ENCODE measurements at regions of chr5 and their contacts with region 1.

Region 1: DNA sequence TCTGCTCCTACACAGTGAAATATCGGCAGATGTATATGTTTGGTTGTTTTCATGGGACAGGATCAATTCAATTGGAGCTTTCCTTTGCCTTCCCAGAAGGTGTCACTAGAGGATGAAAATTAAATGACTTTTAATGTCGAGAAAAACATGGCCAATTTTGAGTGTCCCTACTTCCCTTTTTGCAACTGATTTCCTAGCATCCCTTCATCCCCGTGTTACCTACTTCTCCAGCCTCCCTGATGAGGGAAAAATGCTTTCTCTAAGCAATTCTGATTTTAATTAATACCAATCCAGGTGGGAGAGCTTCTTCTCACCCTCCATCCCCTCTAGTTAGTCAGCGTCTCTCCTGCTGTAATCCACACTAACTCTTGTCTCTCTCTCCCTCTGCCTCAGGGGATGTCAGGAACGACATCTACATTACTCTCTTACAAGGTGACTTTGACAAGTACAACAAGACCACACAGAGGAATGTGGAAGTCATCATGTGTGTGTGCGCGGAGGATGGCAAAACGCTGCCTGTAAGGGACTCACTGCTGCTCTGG is 64.9 kb downstream of the DOCK2 start:
- DNase-seq: no peak
- ATAC-seq: no peak
- H3K4me3 ChIP-seq: no peak overlapping the region
- H3K27ac ChIP-seq: peak overlapping the region; percentile 89
- H3K4me1 ChIP-seq: peaks cover 51% of the 10 kb centered on the region
- H3K27me3 ChIP-seq: no peaks in the 10 kb centered on the region
- CTCF ChIP-seq: peak; percentile 30 to 50 (median 39); a peak in 4 of 6 replicates
- EP300 ChIP-seq: no peak
- POLR2A ChIP-seq: no peak
- RAD21 ChIP-seq: peak; percentile 54

Region 2: DNA sequence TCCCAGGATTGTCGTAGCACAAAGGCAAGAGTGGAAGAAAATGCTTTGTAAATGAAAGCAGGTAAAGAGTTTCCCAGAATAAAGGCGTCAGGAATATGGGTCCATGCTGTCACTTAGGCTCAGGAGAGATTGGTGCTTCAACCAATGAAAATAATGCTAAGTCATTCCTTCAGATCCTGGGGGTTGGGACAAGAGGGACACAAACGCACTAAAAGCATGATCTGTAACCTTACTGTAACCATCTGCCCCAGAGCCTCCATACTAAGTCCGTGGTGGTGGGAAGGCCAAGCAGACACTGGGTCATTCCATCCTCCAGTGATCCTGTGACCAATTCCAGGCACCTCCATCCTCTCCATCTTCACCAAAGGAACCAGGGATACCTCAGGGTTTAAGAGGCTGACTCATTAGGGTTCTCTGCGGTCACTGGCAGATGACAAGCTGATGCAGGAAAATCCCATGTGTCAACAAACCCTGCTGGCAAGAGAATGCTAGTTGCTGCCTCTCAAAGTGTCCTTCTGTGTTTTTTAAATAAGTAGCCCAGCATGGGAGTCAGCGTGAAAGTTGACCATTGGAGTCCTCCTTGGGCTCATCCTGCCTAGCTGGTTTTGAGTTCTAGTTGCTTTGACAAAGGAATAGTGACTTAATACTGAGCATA is 601.4 kb before region 1 on chr5:
- CTCF ChIA-PET with region 1: no interaction called
- POLR2A ChIA-PET with region 1: no interaction called
- RAD21 ChIA-PET with region 1: no interaction called
- SMC1A ChIA-PET with region 1: no interaction called
- in situ Hi-C with region 1: no loop called
- intact Hi-C with region 1: no loop called
- DNase-seq: no peak
- ATAC-seq: no peak
- H3K4me3 ChIP-seq: no peak overlapping the region
- H3K27ac ChIP-seq: no peak overlapping the region
- H3K4me1 ChIP-seq: no peaks in the 10 kb centered on the region
- H3K27me3 ChIP-seq: peaks cover 0 to 2% of the 10 kb centered on the region in 2 experiments; a peak in 2 of 4 replicates
- CTCF ChIP-seq: no peak
- EP300 ChIP-seq: no peak
- POLR2A ChIP-seq: no peak
- RAD21 ChIP-seq: no peak

Region 3: DNA sequence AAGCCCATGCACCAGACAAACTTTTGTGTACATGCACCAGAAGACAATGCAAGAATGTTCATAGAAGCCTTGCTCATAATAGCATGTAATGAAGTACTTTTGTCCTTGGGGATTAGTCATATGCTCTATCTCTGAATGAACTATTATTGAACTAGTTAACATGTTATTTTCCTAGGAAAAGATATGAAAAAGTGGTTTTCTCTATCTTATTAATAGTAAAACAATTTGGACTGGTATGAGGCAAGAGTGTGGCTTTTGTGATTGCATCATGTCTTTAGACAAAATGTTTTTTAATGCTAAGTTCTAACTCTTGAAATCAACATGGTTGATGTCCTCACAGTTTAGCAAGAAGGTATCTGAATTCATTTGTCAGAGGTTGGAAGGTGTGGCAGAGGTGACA is 174.1 kb before region 1 on chr5:
- CTCF ChIA-PET with region 1: no interaction called
- POLR2A ChIA-PET with region 1: no interaction called
- RAD21 ChIA-PET with region 1: no interaction called
- SMC1A ChIA-PET with region 1: no interaction called
- in situ Hi-C with region 1: no loop called
- intact Hi-C with region 1: no loop called
- DNase-seq: no peak
- ATAC-seq: no peak
- H3K4me3 ChIP-seq: no peak overlapping the region
- H3K27ac ChIP-seq: no peak overlapping the region
- H3K4me1 ChIP-seq: no peaks in the 10 kb centered on the region
- H3K27me3 ChIP-seq: no peaks in the 10 kb centered on the region; a peak in 2 of 4 replicates
- CTCF ChIP-seq: no peak
- EP300 ChIP-seq: no peak
- POLR2A ChIP-seq: no peak
- RAD21 ChIP-seq: no peak

Region 4: DNA sequence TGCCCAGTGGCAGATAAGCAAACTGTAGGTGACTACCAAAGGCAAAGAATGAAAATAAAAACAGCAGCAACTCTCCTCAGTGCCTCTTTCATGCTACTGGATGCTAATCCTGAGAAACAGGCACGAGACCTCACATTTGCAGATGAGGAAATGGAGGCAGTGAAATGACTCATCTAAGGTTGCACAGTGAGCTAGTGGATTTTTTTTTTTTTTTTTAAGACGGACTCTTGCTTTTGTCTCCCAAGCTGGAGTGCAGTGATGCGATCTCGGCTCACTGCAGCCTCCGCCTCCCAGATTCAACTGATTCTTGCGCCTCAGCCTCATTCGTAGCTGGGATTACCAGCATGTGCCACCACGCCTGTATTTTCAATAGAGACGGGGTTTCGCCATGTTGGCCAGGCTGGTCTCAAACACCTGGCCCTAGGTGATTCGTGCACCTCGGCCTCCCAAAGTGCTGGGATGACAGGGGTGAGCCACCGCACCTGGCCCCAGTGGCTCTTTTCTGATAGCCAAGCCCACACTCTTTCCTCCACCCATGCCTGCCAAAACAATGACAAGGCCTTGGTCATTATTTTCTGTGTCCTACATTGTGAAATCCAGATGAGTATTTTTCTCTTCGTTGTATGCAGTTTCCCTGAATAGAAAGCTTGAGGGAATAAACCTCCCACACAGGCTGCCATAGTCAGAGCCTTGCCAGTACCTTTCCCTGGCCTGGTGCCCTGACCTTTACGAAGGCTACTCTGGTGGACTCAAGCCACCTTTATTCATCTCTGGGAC is 45.7 kb before region 1 on chr5:
- CTCF ChIA-PET with region 1: interaction called, 3 read pairs
- POLR2A ChIA-PET with region 1: interaction called, 3 read pairs
- RAD21 ChIA-PET with region 1: interaction called, 9 read pairs
- SMC1A ChIA-PET with region 1: interaction called, 12 read pairs
- in situ Hi-C with region 1: no loop called
- intact Hi-C with region 1: no loop called
- DNase-seq: peak; percentile 79
- ATAC-seq: peak; percentile 75
- H3K4me3 ChIP-seq: peak overlapping the region; percentile 40; the same call in 1 of the 2 replicates
- H3K27ac ChIP-seq: peak overlapping the region; percentile 88
- H3K4me1 ChIP-seq: peaks cover 60% of the 10 kb centered on the region
- H3K27me3 ChIP-seq: no peaks in the 10 kb centered on the region
- CTCF ChIP-seq: no peak
- EP300 ChIP-seq: peak; percentile 56 to 70; a peak in 3 of 4 replicates
- POLR2A ChIP-seq: no peak
- RAD21 ChIP-seq: peak; percentile 21; the same call in 1 of the 2 replicates

Region 5: GRCh38 chr5:169753795-169754194 is 51.8 kb after region 1 on chr5:
- CTCF ChIA-PET with region 1: interaction called, 3 read pairs
- POLR2A ChIA-PET with region 1: no interaction called
- RAD21 ChIA-PET with region 1: interaction called, 7 read pairs
- SMC1A ChIA-PET with region 1: interaction called, 10 read pairs
- in situ Hi-C with region 1: no loop called
- intact Hi-C with region 1: no loop called
- DNase-seq: no peak
- ATAC-seq: peak; percentile 18; the same call in 2 of the 3 replicates
- H3K4me3 ChIP-seq: no peak overlapping the region
- H3K27ac ChIP-seq: no peak overlapping the region
- H3K4me1 ChIP-seq: no peaks in the 10 kb centered on the region
- H3K27me3 ChIP-seq: no peaks in the 10 kb centered on the region
- CTCF ChIP-seq: no peak
- EP300 ChIP-seq: no peak
- POLR2A ChIP-seq: no peak
- RAD21 ChIP-seq: no peak

Region 6: DNA sequence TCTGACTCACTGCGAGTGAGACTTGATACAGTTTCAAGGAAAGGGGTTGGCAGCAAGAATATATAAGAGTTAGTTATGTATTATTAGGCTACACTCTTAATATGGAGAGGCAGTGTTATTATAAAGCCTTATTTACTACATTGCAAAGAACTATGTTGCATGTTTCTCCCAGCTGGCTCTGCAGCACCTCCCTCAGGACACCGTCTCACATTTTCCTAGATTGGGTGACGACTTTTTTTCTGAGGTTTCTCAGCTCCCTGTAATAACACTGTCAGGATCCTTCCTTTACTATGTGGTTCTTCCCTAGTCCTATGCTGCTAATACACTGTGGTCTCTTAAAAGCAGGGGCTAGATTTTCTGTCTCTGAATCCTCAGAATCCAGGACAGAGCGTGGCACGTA is 124.6 kb after region 1 on chr5:
- CTCF ChIA-PET with region 1: interaction called, 8 read pairs
- POLR2A ChIA-PET with region 1: no interaction called
- RAD21 ChIA-PET with region 1: interaction called, 12 read pairs
- SMC1A ChIA-PET with region 1: interaction called, 3 read pairs
- in situ Hi-C with region 1: no loop called
- intact Hi-C with region 1: no loop called
- DNase-seq: no peak
- ATAC-seq: peak; percentile 60
- H3K4me3 ChIP-seq: no peak overlapping the region
- H3K27ac ChIP-seq: no peak overlapping the region
- H3K4me1 ChIP-seq: no peaks in the 10 kb centered on the region; the same call in 1 of the 2 replicates
- H3K27me3 ChIP-seq: no peaks in the 10 kb centered on the region
- CTCF ChIP-seq: peak; percentile 7 to 13 (median 12); a peak in 1 of 6 replicates
- EP300 ChIP-seq: no peak
- POLR2A ChIP-seq: no peak
- RAD21 ChIP-seq: peak; percentile 34; the same call in 1 of the 2 replicates

Region 7: GRCh38 chr5:169980418-169981053 is 278.6 kb after region 1 on chr5 and contains the start of gene INSYN2B:
- CTCF ChIA-PET with region 1: interaction called, 73 read pairs
- POLR2A ChIA-PET with region 1: interaction called, 3 read pairs
- RAD21 ChIA-PET with region 1: interaction called, 44 read pairs
- SMC1A ChIA-PET with region 1: interaction called, 41 read pairs
- in situ Hi-C with region 1: loop called (anchors 5 kb)
- intact Hi-C with region 1: loop called (anchors 1 kb)
- DNase-seq: no peak
- ATAC-seq: peak; percentile 90
- H3K4me3 ChIP-seq: no peak within 1 kb of the TSS
- H3K27ac ChIP-seq: no peak within 1 kb of the TSS
- H3K4me1 ChIP-seq: peaks cover 4% of the 10 kb centered on the region; the same call in 1 of the 2 replicates
- H3K27me3 ChIP-seq: no peaks in the 10 kb centered on the region
- CTCF ChIP-seq: peak in 2 of 3 experiments; percentile 33 to 71; a peak in 3 of 6 replicates
- EP300 ChIP-seq: no peak
- POLR2A ChIP-seq: no peak
- RAD21 ChIP-seq: peak; percentile 67
- polyA plus RNA-seq, gene INSYN2B: 0.05 TPM in 1 of 2 experiments, not detected in the other